Posterior cingulate gyrus (tissue), 11 donors: ENCODE measurements at regions of chrX and their contacts with region 1.

Region 1: DNA sequence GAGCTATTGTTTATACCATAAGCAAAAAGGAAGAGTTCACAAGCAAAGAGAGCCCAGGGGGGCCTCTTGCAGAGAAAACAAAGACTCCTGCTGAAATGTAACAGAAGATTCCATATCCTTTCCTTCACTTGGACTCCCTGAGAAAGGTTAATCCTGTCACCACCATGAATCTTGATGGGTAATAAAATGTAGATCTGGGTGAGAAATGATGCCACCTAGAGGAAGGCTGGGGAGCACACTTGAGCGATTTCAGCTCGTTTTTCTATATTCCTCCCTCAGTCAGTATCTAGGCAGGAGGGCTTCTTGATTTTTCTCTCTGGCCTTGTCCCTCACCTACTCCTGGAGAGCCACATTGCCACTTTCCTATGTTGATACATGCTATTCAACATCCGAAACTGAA is 10.2 kb upstream of the KCNE5 start:
- DNase-seq: no peak

Region 2: DNA sequence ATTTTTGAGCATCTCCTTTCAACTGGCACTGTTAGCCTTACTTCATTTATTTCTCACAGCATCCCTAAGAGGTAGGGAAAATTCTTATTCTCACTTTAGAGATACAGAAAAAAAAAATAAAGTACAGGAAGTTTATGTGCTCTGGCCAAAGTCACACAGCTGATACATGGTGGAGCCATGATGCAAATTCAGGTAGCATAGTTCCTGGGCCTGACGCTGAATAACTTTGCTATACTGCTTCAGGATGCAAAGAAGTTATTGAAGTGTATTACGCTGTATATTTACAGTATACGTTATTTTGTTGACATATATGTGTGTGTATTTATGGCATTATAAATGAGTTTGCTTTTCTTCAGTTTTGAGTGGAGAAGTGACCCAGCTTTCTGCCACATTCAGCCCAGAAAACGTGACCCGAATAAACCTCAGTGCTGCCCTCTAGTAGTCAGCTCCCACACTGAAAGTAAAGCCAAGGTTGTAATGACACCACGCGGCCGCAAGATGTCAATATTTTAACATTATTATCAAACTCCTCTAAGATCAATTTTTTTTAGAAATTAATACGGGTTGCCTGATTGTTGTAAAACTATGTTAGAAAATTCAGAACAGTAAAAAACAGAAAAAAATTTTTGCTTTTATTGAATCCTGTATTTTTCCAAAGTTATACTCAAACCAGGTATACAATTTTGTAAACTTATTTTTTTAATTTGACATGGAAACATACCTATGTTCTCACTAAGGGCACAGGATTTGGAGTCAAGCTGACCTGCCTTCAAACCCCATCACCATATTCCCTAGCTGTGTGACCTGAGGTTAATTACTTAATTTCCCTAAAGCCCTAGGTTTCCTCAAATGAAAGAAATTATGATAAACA is 149.5 kb before region 1 on chrX:
- intact Hi-C with region 1: loop called (anchors 1 kb)
- DNase-seq: peak; percentile 26 to 89 (median 55)

Region 3: DNA sequence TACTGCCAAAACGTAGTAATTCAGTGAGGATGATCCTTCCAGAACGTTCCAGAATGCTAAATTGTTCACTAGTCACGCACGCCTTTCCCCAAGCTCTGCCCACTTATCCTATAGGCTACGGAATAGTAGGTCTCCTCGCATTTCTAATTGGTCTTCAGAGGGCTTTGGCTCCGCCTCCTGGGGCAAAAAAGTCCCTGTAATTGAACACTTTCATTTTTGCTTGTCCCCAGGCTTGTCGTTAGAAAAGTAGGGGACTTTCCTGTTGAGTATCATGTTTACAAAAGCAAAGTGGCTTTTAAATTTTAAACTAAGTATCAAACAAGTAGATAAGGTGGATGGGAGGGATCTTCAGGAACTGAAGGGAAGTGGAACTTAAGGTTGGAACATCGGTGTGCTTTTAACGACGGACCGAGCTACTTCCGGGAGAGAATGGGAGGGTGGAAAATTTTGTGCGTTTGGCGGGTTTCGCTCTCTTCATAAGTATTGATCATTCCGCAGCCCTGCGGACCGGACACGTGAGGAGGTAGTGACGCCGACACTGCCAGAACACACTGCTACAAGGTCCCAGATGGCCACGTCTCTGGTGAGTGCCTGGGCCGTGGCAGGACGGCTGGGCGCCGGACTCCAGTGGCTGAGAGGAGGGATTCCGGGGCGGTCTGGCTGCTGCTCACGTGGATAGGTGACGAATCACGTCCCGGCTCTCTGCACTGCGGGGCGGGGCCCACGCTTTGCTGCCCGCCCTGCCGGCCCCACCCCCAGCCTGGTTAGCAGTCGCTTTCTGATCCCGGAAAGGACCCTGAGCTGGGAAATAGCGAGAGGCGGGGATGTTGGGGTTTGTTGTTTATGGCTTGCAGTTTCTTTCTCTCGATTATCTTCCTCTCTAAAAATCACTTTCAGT is 98.5 kb before region 1 on chrX and contains the start of gene NXT2:
- intact Hi-C with region 1: loop called (anchors 5 kb)
- DNase-seq: peak; percentile 84 to 98 (median 87)